Motor neuron (in vitro differentiated cells): ENCODE measurements at regions of chr11 and their contacts with region 1.

Region 1: GRCh38 chr11:33857933-33858371 is 33.9 kb downstream of the LMO2 start:
- ATAC-seq: peak; percentile 86 to 98 (median 94)
- H3K4me3 ChIP-seq: no peak overlapping the region
- H3K27ac ChIP-seq: no peak overlapping the region
- H3K4me1 ChIP-seq: peaks cover 0 to 16% of the 10 kb centered on the region in 2 donors

Region 2: DNA sequence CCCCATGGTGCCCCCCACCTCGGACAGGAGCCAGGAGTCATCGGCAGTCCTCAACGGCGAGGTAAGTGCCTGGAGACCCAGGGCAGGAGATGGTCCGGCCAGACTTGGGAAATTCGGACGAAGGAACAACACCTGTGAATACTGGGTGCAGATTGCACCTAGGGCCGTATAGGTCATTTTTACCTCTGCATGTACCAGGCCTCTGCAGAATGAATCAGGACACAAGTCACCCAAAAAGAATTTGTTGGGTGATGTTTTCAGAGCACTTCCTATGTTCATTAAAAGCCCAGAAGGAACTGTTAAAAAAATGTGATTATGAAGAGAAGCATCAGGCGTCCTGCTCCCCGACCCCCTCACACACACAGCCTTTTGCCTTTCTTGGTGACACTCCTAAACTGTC is 251.2 kb before region 1 on chr11:
- in situ Hi-C with region 1: no loop called
- ATAC-seq: no peak
- H3K4me3 ChIP-seq: no peak overlapping the region
- H3K27ac ChIP-seq: no peak overlapping the region
- H3K4me1 ChIP-seq: no peaks in the 10 kb centered on the region

Region 3: DNA sequence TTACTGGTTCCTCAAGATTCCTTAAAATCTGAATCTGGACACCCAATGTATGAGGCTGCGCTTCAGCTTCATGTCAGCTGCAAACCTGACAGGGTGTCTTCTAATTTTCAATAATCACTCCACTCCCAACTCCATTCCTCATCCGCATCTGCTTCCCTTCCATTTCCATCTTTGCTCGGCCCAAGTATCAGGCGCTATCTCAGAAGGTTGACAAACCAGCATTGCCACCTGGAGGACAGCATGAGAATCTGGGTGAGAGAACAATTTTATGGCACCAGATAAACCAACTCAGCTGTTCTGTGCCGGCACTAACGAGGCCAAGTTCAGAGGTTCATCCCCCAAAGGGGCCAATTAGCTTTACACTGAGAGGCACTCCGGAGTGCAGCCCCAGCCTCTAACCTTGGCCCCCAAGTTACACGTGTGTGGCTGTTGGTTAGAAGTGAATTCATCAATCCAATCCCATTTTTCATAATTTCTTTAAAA is 113.1 kb after region 1 on chr11:
- in situ Hi-C with region 1: loop called in 7 of 9 experiments (anchors 5 to 25 kb)
- ATAC-seq: peak; percentile 53 to 99 (median 70)
- H3K4me3 ChIP-seq: no peak overlapping the region
- H3K27ac ChIP-seq: no peak overlapping the region
- H3K4me1 ChIP-seq: no peaks in the 10 kb centered on the region

Region 4: DNA sequence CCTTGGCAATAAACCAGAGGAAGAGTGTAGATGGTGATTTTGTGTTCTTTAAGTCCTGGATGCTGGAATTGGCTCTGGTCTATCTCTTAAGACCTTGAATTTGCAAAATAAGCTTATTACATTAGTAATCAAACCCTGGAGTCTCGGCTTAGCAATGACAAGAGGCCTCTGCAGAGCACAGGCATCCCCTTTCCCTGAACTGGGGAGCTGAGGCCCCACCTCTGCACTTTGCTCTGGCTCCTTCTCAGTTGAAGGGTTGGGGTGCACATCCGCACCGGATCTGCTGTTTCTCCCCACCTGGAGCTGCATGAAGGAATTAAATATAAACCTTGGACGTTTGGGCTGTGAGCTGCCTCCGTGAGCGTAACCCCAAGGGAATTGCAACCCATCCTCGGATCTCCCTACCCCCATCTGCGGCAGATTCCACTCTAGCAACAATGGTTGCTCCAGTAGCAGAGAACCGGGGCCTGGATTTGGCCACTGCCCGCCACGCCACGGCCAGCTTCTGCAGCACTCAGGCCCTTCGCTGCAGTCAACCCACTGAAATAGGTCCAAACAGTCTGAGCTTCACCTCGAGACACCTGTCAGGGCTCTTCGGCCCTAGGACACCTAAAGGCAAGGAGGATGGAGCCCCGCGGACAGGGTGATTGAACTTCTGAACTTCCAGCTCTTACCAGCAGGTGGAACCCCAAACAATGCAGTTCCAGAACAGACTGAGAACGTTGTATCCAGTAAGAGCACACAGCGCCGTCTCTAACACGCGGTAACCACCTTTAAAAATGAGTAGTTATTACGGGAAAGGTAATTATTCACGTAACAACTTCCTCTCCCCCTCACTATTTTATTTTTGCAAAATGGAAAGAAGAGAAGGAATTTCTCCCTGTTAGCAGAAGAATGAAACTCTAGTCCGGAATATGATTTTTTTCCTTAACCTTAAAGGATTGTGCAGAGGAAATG is 138.8 kb after region 1 on chr11:
- in situ Hi-C with region 1: loop called in 1 of 9 experiments (anchors 25 kb)
- ATAC-seq: peak; percentile 78 to 97 (median 91)
- H3K4me3 ChIP-seq: no peak overlapping the region
- H3K27ac ChIP-seq: no peak overlapping the region
- H3K4me1 ChIP-seq: no peaks in the 10 kb centered on the region